Heart left ventricle (tissue), 16 donors: ENCODE measurements at regions of chr16 and their contacts with region 1.

Region 1: GRCh38 chr16:10971560-10971961 is 27.2 kb downstream of the CLEC16A start:
- DNase-seq: peak in 4 of 5 donors; percentile 29 to 48 (median 42)
- ATAC-seq: peak in 3 of 4 donors; percentile 51 to 72 (median 52)
- H3K4me3 ChIP-seq: no peak overlapping the region
- H3K27ac ChIP-seq: peak overlapping the region in 1 of 12 donors; percentile 5
- H3K4me1 ChIP-seq: peaks cover 0 to 27% (median 12%) of the 10 kb centered on the region in 12 donors
- H3K27me3 ChIP-seq: no peaks in the 10 kb centered on the region
- CTCF ChIP-seq: peak; percentile 70 to 87 (median 79)
- POLR2A ChIP-seq: no peak

Region 2: DNA sequence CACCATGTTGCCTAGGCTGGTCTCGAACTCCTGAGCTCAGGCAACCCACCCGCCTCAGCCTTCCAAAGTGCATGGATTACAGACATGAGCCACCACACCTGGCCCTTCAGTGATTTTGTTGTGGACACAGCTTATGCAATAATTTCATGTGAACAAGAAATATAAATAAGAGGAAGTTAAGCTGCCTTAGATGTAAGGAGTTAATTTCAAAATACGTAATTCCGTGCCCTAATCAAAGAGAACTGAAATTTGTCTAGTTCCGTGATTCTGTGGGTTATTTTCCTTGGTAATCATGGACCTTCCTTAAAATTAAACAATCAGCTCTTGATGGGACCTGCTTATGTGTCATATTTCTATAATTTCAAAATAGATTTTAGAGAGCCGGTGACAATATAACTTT is 164.9 kb before region 1 on chr16:
- intact Hi-C with region 1: no loop called
- DNase-seq: no peak
- ATAC-seq: peak in 1 of 4 donors; percentile 16
- H3K4me3 ChIP-seq: no peak overlapping the region
- H3K27ac ChIP-seq: peak overlapping the region in 2 of 12 donors; percentile 26 to 65
- H3K4me1 ChIP-seq: peaks cover 0 to 5% (median 0%) of the 10 kb centered on the region in 12 donors
- H3K27me3 ChIP-seq: no peaks in the 10 kb centered on the region
- CTCF ChIP-seq: no peak
- POLR2A ChIP-seq: no peak

Region 3: DNA sequence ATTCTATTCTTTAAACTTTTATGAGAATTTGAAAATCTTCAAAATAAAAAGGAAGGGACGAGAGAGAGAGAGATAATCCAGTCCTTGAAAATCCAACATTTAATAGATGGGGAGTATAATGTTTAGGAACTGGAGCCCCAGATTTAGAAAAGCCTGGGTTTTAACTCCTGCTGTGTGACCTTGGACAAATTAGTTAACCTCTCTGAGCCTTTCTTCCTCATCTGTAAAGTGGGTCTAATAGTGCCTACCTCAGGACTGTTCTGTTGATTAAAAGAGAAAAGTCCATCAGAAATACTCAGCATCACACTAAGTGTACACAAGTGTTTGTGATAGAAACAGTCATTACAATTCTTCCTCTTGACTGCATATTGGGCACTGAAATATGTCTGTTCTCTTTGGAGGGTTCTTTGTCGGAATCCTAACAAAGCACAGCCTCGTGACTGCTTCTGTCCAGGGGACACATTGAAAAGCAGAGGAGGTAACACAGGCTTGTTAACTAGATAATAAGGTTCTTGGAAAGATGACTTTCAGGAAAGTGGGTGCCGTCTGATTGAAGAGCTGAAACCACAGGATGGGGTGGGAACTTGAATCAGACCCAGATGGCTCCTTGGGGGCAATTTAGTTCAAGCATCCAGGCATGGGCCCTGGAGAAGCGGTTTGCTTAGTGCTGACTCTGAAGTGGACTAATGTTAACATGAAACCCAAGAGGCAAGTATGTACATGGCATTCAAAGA is 101.0 kb after region 1 on chr16:
- intact Hi-C with region 1: loop called in 1 of 10 experiments (anchors 5 kb)
- DNase-seq: no peak
- ATAC-seq: no peak
- H3K4me3 ChIP-seq: no peak overlapping the region
- H3K27ac ChIP-seq: no peak overlapping the region
- H3K4me1 ChIP-seq: no peaks in the 10 kb centered on the region
- H3K27me3 ChIP-seq: no peaks in the 10 kb centered on the region
- CTCF ChIP-seq: no peak
- POLR2A ChIP-seq: no peak